ENCODE measurements at regions of chr2 and their contacts with region 1.

Region 1: DNA sequence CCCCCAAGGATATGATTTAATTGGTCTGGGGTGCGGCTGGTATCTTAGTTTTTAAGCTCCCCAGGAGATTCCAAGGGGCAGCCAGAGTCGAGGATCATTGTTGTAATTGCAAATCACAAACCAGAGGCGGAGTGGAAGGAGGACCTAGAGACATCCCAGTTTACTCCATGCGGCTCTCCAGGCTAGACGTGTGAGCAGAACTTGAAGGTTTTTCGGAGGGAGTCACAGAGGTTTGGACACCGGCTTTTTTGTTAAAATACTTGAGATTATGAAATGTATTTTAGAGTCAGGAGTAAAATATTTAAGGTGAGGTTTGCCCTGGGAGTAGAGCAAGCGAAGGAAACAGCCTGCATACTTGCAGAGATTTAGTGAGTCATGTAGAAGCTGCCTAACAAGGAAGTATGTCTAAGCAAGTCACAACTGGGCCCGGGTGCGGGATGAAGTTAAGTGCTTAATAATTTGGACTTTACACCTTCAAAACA is 39.5 kb downstream of the TGOLN2 start:
- DNase-seq: no peak
- ATAC-seq: no peak
- H3K4me3 Mint-ChIP-seq: no peak overlapping the region
- H3K27ac Mint-ChIP-seq: no peak overlapping the region
- H3K4me1 Mint-ChIP-seq: peaks cover 24% of the 10 kb centered on the region
- H3K27me3 Mint-ChIP-seq: no peaks in the 10 kb centered on the region
- CTCF ChIP-seq: no peak

Region 2: GRCh38 chr2:84486441-84487115 is 801.7 kb before region 1 on chr2:
- CTCF ChIA-PET with region 1: no interaction called
- POLR2A ChIA-PET with region 1: no interaction called
- intact Hi-C with region 1: loop called (anchors 10 kb)
- DNase-seq: no peak
- ATAC-seq: no peak
- H3K4me3 Mint-ChIP-seq: no peak overlapping the region
- H3K27ac Mint-ChIP-seq: no peak overlapping the region
- H3K4me1 Mint-ChIP-seq: peaks cover 11% of the 10 kb centered on the region
- H3K27me3 Mint-ChIP-seq: no peaks in the 10 kb centered on the region
- CTCF ChIP-seq: no peak

Region 3: DNA sequence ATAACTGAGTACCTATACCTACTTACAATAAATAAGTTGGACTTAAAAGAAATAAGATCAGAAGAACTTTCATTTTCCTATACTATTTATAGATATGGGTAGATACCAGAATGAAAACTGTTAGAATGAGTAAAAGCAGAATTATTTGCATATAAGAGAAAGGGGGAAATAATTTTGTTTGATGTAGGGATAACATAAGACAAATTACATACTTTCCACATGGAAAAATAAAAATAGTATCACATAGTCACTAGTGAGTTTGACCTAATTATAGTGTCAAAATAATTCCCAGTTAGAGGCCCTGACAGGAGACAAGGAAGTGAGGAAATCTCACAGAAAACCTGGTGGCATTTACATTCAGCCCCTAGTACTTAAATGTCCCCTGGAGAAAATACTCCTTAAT is 288.7 kb before region 1 on chr2:
- CTCF ChIA-PET with region 1: no interaction called
- POLR2A ChIA-PET with region 1: no interaction called
- intact Hi-C with region 1: no loop called
- DNase-seq: no peak
- ATAC-seq: peak; percentile 6
- H3K4me3 Mint-ChIP-seq: peak overlapping the region; percentile 38
- H3K27ac Mint-ChIP-seq: peak overlapping the region; percentile 96
- H3K4me1 Mint-ChIP-seq: peaks cover 71% of the 10 kb centered on the region
- H3K27me3 Mint-ChIP-seq: no peaks in the 10 kb centered on the region
- CTCF ChIP-seq: no peak

Region 4: DNA sequence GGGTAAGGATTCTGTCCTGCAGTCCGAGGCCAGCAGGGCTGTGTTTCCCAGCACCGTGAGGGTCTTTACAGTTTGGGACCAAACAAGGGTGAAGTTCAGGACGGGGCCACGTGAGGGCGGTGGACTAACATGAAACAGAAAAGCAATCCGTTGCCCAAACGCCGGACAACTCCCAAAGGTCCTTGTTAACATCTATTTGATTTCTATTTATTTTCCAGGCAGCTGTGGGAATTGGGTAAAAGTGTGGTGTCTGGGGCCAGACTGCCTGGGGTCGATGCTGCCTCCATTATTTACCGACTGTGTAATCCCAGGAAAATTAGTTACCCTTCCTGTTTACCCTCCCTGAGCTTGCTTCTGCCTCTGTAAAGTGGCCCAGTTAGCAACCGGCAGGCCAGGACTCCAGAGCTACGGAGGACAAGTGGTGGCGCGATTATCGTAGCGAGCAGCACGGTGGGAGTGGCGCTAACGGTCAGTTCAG is 221.4 kb before region 1 on chr2:
- CTCF ChIA-PET with region 1: interaction called, 30 read pairs
- POLR2A ChIA-PET with region 1: no interaction called
- intact Hi-C with region 1: loop called (anchors 5 kb)
- DNase-seq: peak; percentile 81
- ATAC-seq: peak; percentile 82
- H3K4me3 Mint-ChIP-seq: no peak overlapping the region
- H3K27ac Mint-ChIP-seq: no peak overlapping the region
- H3K4me1 Mint-ChIP-seq: peaks cover 4% of the 10 kb centered on the region
- H3K27me3 Mint-ChIP-seq: peaks cover 15% of the 10 kb centered on the region
- CTCF ChIP-seq: peak; percentile 70

Region 5: GRCh38 chr2:85266146-85267041 is 21.9 kb before region 1 on chr2:
- CTCF ChIA-PET with region 1: interaction called, 64 read pairs
- POLR2A ChIA-PET with region 1: no interaction called
- intact Hi-C with region 1: no loop called
- DNase-seq: peak; percentile 86
- ATAC-seq: peak; percentile 87
- H3K4me3 Mint-ChIP-seq: no peak overlapping the region
- H3K27ac Mint-ChIP-seq: no peak overlapping the region
- H3K4me1 Mint-ChIP-seq: no peaks in the 10 kb centered on the region
- H3K27me3 Mint-ChIP-seq: no peaks in the 10 kb centered on the region
- CTCF ChIP-seq: peak; percentile 96

Region 6: DNA sequence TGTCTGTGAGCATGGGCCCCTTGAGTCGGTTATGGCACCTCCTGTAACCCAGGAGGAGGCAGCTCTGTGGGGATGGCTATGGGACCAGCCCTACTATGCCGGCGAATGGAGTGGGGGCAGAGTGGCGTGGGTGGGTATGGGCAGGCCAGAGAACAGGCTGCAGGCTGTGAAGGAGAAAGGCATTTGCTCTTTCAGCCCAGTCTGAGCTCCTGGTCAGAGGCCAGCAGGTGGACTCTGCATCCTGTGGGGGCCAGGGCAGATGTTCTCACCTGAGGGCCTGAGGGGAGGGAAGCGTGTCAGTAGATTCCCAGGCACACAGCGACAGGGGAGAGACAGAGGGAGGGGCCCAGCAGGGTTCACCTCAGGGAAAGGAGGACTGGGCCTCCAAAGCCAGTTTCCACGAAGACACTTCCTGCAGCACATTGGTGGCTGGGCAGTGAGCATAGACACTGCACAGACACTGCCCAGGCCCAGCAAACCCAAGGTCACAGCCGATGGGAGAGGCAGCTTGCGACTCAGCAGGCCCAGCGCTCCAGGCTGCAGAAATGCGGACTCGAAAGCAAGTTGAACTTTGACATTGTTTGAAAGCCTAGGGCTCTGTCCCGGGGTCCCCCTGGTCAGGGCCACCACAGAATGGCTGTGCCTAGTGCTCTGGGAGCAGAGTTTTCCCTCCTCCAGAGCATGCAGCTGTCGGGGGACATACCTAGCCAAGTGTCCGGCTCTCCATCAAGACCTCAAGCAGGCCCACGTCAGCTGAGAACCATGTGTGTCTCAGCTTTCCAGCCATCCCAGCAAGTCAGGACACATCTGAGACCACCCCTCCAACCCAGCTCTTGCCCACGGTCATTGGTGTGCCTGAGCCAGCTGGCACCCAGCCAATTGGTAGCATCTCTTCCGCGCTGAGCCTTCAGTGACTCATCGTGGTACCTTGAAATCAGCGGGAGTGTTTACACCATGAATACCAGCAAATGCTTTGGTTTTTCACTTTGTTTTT is 14.2 kb before region 1 on chr2:
- CTCF ChIA-PET with region 1: interaction called, 64 read pairs
- POLR2A ChIA-PET with region 1: no interaction called
- intact Hi-C with region 1: no loop called
- DNase-seq: peak; percentile 11
- ATAC-seq: no peak
- H3K4me3 Mint-ChIP-seq: no peak overlapping the region
- H3K27ac Mint-ChIP-seq: no peak overlapping the region
- H3K4me1 Mint-ChIP-seq: no peaks in the 10 kb centered on the region
- H3K27me3 Mint-ChIP-seq: no peaks in the 10 kb centered on the region
- CTCF ChIP-seq: no peak

Region 7: GRCh38 chr2:85302121-85302520 is 13.8 kb after region 1 on chr2:
- CTCF ChIA-PET with region 1: interaction called, 63 read pairs
- POLR2A ChIA-PET with region 1: interaction called, 3 read pairs
- intact Hi-C with region 1: no loop called
- DNase-seq: no peak
- ATAC-seq: no peak
- H3K4me3 Mint-ChIP-seq: no peak overlapping the region
- H3K27ac Mint-ChIP-seq: no peak overlapping the region
- H3K4me1 Mint-ChIP-seq: peaks cover 7% of the 10 kb centered on the region
- H3K27me3 Mint-ChIP-seq: peaks cover 3% of the 10 kb centered on the region
- CTCF ChIP-seq: no peak

Region 8: GRCh38 chr2:85308896-85309555 is 20.7 kb after region 1 on chr2:
- CTCF ChIA-PET with region 1: interaction called, 10 read pairs
- POLR2A ChIA-PET with region 1: interaction called, 3 read pairs
- intact Hi-C with region 1: no loop called
- DNase-seq: peak; percentile 40
- ATAC-seq: peak; percentile 32
- H3K4me3 Mint-ChIP-seq: peak overlapping the region; percentile 71
- H3K27ac Mint-ChIP-seq: peak overlapping the region; percentile 74
- H3K4me1 Mint-ChIP-seq: peaks cover 31% of the 10 kb centered on the region
- H3K27me3 Mint-ChIP-seq: no peaks in the 10 kb centered on the region
- CTCF ChIP-seq: no peak

Measured in activated CD8-positive, alpha-beta T cell treated with anti-CD3 and anti-CD28 coated beads for 36 hours (primary cell).